BJ (cell line): ENCODE measurements at regions of chr9 and their contacts with region 1.

Region 1: GRCh38 chr9:121246821-121247561 is 21.0 kb upstream of the GSN start:
- DNase-seq: peak; percentile 70
- H3K4me3 ChIP-seq: no peak overlapping the region
- H3K27me3 ChIP-seq: no peaks in the 10 kb centered on the region
- CTCF ChIP-seq: no peak

Region 2: GRCh38 chr9:121233906-121234901 is 12.8 kb before region 1 on chr9:
- CTCF ChIA-PET with region 1: interaction called, 15 read pairs
- POLR2A ChIA-PET with region 1: no interaction called
- DNase-seq: no peak
- H3K4me3 ChIP-seq: no peak overlapping the region
- H3K27me3 ChIP-seq: no peaks in the 10 kb centered on the region
- CTCF ChIP-seq: no peak

Region 3: GRCh38 chr9:121267689-121268597 is 21.0 kb after region 1 on chr9 and contains the start of gene GSN:
- CTCF ChIA-PET with region 1: interaction called, 4 read pairs
- POLR2A ChIA-PET with region 1: interaction called, 11 read pairs
- DNase-seq: no peak
- H3K4me3 ChIP-seq: peak within 1 kb of the TSS; percentile 89
- H3K27me3 ChIP-seq: no peaks in the 10 kb centered on the region
- CTCF ChIP-seq: peak; percentile 24; the same call in 1 of the 2 replicates
- polyA plus RNA-seq, gene GSN: 493 and 765 TPM in 2 replicates

Region 4: GRCh38 chr9:121340676-121341392 is 93.8 kb after region 1 on chr9:
- CTCF ChIA-PET with region 1: no interaction called
- POLR2A ChIA-PET with region 1: no interaction called
- DNase-seq: no peak
- H3K4me3 ChIP-seq: no peak overlapping the region
- H3K27me3 ChIP-seq: no peaks in the 10 kb centered on the region
- CTCF ChIP-seq: no peak